ENCODE measurements at regions of chr19 and their contacts with region 1.

Region 1: GRCh38 chr19:41563854-41564514 is 12.0 kb upstream of the CEACAM21 start:
- DNase-seq: peak in 1 of 2 experiments; percentile 35
- ATAC-seq: peak in 1 of 2 experiments; percentile 28; a peak in 2 of 6 replicates
- H3K4me3 ChIP-seq: no peak overlapping the region
- H3K27ac ChIP-seq: no peak overlapping the region
- H3K4me1 ChIP-seq: peaks cover 13% of the 10 kb centered on the region; the same call in 2 of the 3 replicates
- CTCF ChIP-seq: no peak
- EP300 ChIP-seq: no peak
- POLR2A ChIP-seq: no peak
- RAD21 ChIP-seq: no peak

Region 2: DNA sequence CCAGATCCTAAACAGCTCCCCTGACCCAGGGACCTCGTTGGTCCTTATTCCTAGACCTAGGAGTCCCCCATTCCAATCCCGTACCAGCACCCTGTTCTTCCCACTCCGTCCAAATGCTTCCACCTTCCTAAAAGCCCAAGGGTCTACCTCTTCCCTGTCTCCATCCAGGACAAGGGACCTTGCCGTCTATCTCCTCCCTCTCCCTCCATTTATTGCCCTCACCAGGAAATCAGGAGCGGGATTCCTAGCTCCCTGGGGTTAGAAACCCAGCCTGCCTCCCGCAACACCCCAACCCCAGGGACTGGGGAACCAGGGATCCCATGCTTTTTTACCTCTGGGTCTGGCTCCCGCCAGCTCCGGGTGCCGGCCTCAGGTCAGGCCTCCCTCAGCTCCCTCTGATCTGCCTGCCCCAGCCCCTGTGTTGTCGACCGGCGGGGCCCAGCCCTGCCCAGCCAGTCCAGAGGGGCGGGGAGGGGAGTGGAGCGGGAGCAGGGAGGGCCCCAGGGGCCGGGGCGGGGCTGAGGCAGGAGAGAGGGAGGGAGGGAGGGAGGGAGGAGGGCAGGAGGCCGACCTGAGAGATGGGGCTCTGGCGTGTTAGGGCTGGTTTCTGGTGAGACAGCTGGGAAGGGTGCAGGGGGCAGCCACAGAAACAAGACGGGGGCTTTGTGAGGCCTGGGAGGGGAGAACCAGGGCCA is 136.9 kb before region 1 on chr19 and contains the start of gene B3GNT8:
- CTCF ChIA-PET with region 1: interaction called, 52 read pairs
- POLR2A ChIA-PET with region 1: no interaction called
- DNase-seq: no peak
- ATAC-seq: peak; percentile 7 to 10; a peak in 3 of 6 replicates
- H3K4me3 ChIP-seq: no peak within 1 kb of the TSS
- H3K27ac ChIP-seq: no peak within 1 kb of the TSS
- H3K4me1 ChIP-seq: no peaks in the 10 kb centered on the region
- CTCF ChIP-seq: no peak
- EP300 ChIP-seq: no peak
- POLR2A ChIP-seq: no peak
- RAD21 ChIP-seq: no peak
- polyA plus RNA-seq, gene B3GNT8: not detected in 2 replicates

Region 3: DNA sequence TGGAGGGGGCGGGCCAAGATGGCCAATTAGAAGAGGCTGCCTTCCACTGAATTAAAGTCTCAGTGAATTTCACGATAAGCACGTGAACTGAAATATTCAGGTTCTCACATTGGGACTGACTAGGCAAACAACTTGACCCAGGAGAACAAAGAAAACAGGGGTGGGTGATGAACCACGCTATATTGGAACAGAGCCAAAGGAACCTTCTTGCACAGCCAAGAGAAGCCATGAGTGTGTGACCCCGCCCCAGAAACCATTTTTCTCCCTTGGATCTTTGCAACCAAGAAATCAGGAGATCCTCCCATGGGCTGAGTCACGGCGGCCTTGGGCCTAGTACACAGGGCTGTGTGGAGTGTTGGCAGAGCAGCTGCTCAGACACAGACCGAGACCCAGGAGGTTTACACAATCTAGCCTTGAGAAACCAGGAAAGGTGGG is 84.2 kb before region 1 on chr19:
- CTCF ChIA-PET with region 1: interaction called, 27 read pairs
- POLR2A ChIA-PET with region 1: no interaction called
- DNase-seq: peak in 1 of 2 experiments; percentile 41
- ATAC-seq: peak in 1 of 2 experiments; percentile 53; a peak in 3 of 6 replicates
- H3K4me3 ChIP-seq: no peak overlapping the region
- H3K27ac ChIP-seq: no peak overlapping the region
- H3K4me1 ChIP-seq: no peaks in the 10 kb centered on the region
- CTCF ChIP-seq: no peak
- EP300 ChIP-seq: no peak
- POLR2A ChIP-seq: no peak
- RAD21 ChIP-seq: no peak

Region 4: GRCh38 chr19:41531438-41532311 is 32.3 kb before region 1 on chr19:
- CTCF ChIA-PET with region 1: interaction called, 46 read pairs
- POLR2A ChIA-PET with region 1: no interaction called
- DNase-seq: peak; percentile 85
- ATAC-seq: peak; percentile 73 to 86
- H3K4me3 ChIP-seq: peak overlapping the region; percentile 38
- H3K27ac ChIP-seq: no peak overlapping the region
- H3K4me1 ChIP-seq: peaks cover 7% of the 10 kb centered on the region; the same call in 2 of the 3 replicates
- CTCF ChIP-seq: no peak
- EP300 ChIP-seq: no peak
- POLR2A ChIP-seq: no peak
- RAD21 ChIP-seq: no peak

Region 5: DNA sequence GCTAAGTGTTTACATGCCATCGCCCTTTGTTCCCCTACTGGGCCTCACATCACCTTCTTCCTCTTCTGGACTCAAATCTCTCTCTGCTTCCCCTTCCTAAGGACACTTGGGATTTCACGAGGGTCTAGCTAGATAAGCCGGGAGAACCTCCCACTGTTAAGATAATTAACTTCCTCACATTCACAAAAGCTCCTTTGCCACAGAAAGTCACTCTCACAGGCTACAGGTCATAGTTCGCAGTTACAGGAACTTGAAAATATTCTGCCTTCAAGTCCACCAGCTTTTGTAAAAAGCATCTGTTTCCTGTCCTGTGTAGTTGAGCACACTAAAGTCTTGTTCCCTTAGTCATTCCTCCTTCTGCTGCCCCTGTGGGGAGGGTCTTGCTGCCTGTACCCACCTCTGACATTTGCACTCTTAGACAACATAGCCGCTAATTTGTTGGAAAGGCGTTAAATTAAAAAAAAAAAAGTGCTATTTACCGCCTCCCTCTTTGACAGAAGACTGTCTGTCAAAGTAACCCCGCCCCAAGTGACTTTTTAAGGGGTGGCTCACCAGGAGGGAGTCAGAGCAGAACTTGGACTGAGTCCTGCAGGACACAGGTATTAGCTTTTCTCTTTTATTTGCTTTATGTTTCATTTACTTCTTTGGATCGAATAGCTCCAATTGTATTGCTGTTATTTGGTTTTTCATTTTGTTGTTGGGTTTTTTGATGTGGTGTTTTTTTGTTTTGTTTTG is 14.9 kb before region 1 on chr19:
- CTCF ChIA-PET with region 1: interaction called, 1,153 read pairs
- POLR2A ChIA-PET with region 1: interaction called, 3 read pairs
- DNase-seq: no peak
- ATAC-seq: no peak
- H3K4me3 ChIP-seq: no peak overlapping the region
- H3K27ac ChIP-seq: no peak overlapping the region
- H3K4me1 ChIP-seq: no peaks in the 10 kb centered on the region
- CTCF ChIP-seq: no peak
- EP300 ChIP-seq: no peak
- POLR2A ChIP-seq: no peak
- RAD21 ChIP-seq: no peak

Measured in A549 (cell line).